Activated T-helper 1 cell treated with anti-CD3 and anti-CD28 coated beads, Interleukin-12 subunit alpha, Interleukin-12 subunit beta, Interleukin-2, Interleukin-4 antibody, amounts not matched to agents 30 ng/mL and 10 ng/mL and 1 ng/mL, durations not matched to agents 14 hours and 24 hours and 36 hours (primary cell): ENCODE measurements at regions of chr18 and their contacts with region 1.

Region 1: GRCh38 chr18:69737851-69738250 is 209.8 kb downstream of the CD226 start:
- DNase-seq: no peak
- H3K4me3 Mint-ChIP-seq: no peak overlapping the region
- H3K27ac Mint-ChIP-seq: no peak overlapping the region
- H3K4me1 Mint-ChIP-seq: no peaks in the 10 kb centered on the region
- H3K27me3 Mint-ChIP-seq: no peaks in the 10 kb centered on the region

Region 2: DNA sequence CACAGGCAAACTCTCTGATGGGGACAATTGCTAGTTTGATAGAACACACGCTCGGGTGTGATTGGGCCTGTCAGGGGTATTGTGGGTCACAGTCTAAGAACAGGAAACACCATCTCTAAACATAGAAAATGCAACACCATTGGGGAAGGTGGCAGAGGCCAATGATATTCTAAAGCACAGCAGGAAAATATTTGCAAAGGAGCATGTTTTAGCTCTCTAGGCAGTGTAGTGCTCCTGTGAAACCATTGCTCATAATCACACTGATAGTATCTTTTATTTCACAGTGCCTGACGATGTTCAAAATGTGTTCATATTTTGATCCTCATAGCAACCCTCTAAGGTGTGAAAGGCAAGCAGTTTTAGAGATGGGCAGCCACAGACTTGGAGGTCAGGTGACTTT is 14.4 kb before region 1 on chr18:
- intact Hi-C with region 1: loop called (anchors 2 kb)
- DNase-seq: no peak
- H3K4me3 Mint-ChIP-seq: no peak overlapping the region
- H3K27ac Mint-ChIP-seq: no peak overlapping the region
- H3K4me1 Mint-ChIP-seq: peaks cover 3% of the 10 kb centered on the region
- H3K27me3 Mint-ChIP-seq: no peaks in the 10 kb centered on the region